ENCODE measurements at regions of chr20 and their contacts with region 1.

Region 1: GRCh38 chr20:58980700-58981627 is at the start of gene NELFCD:
- DNase-seq: peak; percentile 95
- ATAC-seq: peak; percentile 96
- total RNA-seq, gene NELFCD: 30.6 TPM

Region 2: DNA sequence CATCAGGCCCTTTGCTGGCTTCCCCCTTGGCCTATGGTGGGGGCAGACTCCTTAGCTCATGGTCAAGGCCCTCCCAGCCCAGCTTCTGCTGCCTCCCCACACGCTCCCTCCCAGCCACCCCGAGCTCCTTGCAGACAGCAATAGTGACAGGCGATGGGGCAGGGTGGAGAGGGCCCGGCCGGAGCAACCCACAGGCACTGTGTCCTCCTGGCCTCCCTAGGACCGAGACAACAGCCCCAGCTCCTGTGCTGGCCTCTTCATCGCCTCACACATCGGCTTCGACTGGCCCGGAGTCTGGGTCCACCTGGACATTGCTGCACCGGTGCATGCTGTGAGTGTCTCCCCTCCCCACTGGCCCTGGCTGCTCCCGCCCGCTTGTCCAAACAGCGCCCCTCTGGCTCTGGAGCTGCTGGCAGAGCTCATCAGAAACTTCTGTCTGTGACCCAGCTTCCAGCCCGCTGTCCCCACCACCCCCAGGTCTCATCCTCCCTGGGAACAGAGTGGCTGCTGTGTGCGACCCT is 266.6 kb before region 1 on chr20:
- intact Hi-C with region 1: no loop called
- DNase-seq: peak; percentile 56
- ATAC-seq: no peak

Region 3: GRCh38 chr20:58890518-58891085 is 90.4 kb before region 1 on chr20:
- intact Hi-C with region 1: loop called (anchors 1 kb)
- DNase-seq: peak; percentile 86
- ATAC-seq: peak; percentile 81

Region 4: GRCh38 chr20:58895449-58896180 is 85.3 kb before region 1 on chr20:
- intact Hi-C with region 1: loop called (anchors 1 kb)
- DNase-seq: no peak
- ATAC-seq: no peak

Region 5: DNA sequence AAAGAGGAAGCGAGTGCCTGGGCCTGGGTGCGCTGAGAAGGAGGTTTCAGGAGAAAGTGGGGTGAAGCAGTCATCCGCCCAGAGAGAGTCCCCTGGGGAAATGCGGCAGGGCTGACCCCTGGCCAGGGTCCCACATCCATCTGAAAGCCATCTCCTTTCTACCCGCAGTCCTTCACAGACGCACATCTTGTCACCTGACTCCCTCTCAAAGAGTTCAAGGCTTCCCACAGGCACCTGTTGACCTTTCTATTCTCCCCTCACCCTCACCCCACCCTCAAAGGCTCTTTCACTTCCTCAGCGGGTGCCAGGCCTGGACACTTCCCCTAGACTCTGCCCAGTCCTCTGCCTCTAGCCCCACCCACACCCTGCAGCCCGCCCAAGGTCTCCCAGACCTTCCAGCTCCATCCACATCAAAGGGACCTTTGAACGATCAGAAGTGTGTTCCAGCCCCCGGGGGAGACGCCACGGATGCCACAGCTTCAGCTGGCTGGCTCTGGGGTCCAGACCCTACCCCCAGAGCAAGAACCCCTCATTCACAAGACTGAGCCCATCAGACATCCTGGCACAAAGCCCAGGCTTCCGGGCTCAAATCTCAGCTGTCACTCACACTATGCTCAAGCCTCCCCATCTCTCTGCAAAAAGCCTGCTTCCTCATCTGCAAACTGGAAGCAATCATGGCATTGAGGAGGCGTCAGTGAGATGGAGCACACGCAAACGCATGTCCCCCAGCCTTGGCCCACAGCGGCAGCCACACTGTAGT is 24.0 kb after region 1 on chr20:
- intact Hi-C with region 1: loop called (anchors 2 kb)
- DNase-seq: peak; percentile 82
- ATAC-seq: peak; percentile 61

Region 6: DNA sequence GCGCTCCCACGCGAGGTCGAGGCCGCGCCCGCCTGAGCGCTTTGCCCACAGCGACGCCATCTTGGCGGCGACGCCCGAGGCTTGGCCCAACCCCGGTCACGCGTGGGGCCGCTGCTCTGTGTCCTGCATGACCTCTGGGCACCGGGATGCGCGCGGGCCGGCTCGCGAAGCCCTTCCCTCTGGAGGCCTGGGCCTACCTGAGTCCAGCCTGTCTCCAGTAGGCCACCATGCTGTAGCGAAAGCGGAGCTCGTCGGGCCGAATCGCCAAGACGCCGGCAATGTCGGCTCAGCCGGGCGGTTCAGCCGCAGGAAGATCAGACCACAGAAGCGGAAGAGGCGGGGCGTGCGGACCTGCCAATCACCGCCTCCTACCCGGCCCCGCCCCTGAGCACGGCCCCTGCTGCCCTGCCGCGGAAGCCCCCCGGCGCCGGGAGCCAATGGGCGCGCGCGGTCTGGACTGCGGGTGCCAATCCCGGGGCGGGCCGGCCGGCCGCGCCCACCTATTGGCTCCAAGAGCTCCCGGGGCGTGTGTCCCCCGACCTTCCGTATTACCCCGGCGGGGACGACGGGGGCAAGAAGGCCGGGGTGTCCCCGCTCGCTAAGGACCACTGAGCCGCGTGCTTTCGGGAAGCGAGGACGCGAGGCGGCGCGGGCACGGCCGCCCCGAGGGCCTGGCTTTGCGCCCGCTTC is 51.2 kb after region 1 on chr20 and contains the start of gene ATP5F1E:
- intact Hi-C with region 1: loop called (anchors 2 kb)
- DNase-seq: peak; percentile 98
- ATAC-seq: peak; percentile 100
- total RNA-seq, gene ATP5F1E: 132 TPM

Region 7: DNA sequence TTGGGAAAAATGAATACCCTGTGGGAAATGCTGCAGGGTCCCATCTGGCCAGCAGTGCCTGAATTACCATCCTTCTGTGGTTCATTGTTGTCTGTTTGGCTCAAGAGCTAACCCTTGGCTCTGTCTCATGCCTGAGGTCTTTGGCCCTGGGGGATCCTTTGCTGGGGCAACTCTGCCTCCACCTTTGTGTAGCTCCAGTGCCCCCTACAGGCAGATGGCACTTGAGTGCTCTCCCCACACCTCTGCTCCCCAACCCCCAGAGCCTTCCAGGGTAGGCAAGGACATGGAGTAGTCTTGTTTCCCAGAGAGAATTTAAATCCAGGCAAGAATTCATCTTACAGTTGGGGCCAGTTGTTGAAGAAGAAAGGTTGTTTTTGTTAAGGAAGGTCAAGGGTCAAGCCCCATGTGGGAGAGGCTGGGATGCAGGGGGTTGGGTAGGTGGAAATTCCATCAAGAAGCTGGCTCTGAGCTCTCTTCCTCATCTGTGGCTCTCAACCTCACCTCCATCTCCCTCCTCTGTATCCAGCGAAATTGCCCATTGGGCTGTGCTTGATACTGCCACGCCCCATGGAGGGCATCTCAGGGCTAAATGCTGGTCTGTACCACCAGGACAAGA is 226.9 kb after region 1 on chr20:
- intact Hi-C with region 1: no loop called
- DNase-seq: peak; percentile 75
- ATAC-seq: peak; percentile 70

Measured in Right ventricle myocardium inferior (tissue), 1 donor.